GM12878 (cell line): ENCODE measurements at regions of chr1 and their contacts with region 1.

Region 1: DNA sequence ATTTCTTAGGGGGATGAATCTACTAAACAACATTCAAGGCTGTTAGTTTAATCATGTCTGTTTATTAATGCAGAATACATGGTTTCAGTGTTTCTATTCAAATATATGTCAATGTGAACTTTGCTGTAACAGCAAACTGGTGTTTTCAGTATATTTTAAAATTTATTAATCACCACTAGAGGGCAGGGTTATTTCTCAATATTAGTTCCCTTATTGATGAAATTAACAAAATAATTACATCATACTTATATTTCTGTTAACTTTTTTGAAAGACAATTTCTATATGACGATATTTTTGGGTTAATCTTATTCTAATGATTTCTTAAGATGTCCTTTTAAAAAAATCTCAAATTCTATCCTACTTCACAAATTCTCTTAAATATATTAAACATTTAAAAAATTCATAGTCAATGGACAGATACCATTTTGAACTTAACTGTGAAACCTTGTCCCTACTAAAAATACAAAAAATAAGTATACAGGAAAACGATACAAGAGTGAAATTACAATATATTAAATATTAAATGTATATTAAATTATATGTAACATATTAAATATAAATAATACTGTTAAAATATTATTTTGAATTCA is 1034.1 kb upstream of the PRMT6 start:
- DNase-seq: no peak
- ATAC-seq: 0 out of 3 replicates have a peak, but pooled peaks have one; percentile 30
- H3K4me3 ChIP-seq: no peak overlapping the region
- H3K27ac ChIP-seq: no peak overlapping the region
- H3K4me1 ChIP-seq: no peaks in the 10 kb centered on the region
- H3K27me3 ChIP-seq: no peaks in the 10 kb centered on the region
- CTCF ChIP-seq: peak in 1 of 3 experiments; percentile 16; a peak in 2 of 6 replicates
- EP300 ChIP-seq: no peak
- POLR2A ChIP-seq: no peak
- RAD21 ChIP-seq: 0 out of 2 replicates have a peak, but pooled peaks have one; percentile 13

Region 2: GRCh38 chr1:106049595-106049994 is 27.2 kb after region 1 on chr1:
- CTCF ChIA-PET with region 1: no interaction called
- POLR2A ChIA-PET with region 1: no interaction called
- RAD21 ChIA-PET with region 1: no interaction called
- SMC1A ChIA-PET with region 1: no interaction called
- in situ Hi-C with region 1: no loop called
- intact Hi-C with region 1: no loop called
- DNase-seq: no peak
- ATAC-seq: no peak
- H3K4me3 ChIP-seq: no peak overlapping the region
- H3K27ac ChIP-seq: no peak overlapping the region
- H3K4me1 ChIP-seq: no peaks in the 10 kb centered on the region
- H3K27me3 ChIP-seq: no peaks in the 10 kb centered on the region
- CTCF ChIP-seq: no peak
- EP300 ChIP-seq: no peak
- POLR2A ChIP-seq: no peak
- RAD21 ChIP-seq: no peak

Region 3: DNA sequence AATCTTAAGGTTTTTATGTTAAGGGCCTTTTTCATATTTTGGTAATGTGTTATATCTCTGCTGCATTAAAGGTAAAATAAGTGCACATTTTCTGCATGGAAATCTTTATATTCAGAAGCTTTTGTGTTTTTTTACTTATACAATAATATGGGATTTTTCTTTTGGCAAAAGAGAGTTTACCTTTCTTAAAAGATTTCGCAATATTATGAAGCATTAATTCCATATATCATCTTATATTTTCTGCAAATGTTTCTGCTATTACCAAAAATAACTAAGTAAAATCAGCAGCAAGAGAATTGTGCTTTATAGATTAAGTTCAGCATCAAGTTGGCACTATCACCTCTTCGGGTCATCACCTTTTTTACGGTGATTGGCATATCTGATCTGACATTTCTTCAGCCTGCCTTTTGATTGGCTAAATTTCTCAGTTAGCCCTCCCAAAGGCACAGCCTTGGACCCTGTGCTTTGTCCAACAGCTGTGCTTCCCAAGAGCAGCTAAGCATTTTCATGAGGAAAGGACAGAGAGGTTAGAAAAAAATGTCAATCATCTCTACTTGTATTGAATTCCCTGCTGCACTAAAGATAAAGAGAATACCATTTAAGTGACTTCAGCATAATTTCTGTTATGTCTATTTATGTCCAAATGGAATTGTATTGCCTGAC is 267.0 kb after region 1 on chr1:
- CTCF ChIA-PET with region 1: no interaction called
- POLR2A ChIA-PET with region 1: no interaction called
- RAD21 ChIA-PET with region 1: no interaction called
- SMC1A ChIA-PET with region 1: no interaction called
- in situ Hi-C with region 1: no loop called
- intact Hi-C with region 1: no loop called
- DNase-seq: no peak
- ATAC-seq: no peak
- H3K4me3 ChIP-seq: no peak overlapping the region
- H3K27ac ChIP-seq: no peak overlapping the region
- H3K4me1 ChIP-seq: no peaks in the 10 kb centered on the region
- H3K27me3 ChIP-seq: no peaks in the 10 kb centered on the region
- CTCF ChIP-seq: no peak
- EP300 ChIP-seq: no peak
- POLR2A ChIP-seq: no peak
- RAD21 ChIP-seq: no peak

Region 4: GRCh38 chr1:107153014-107153413 is 1130.6 kb after region 1 on chr1:
- CTCF ChIA-PET with region 1: no interaction called
- POLR2A ChIA-PET with region 1: no interaction called
- RAD21 ChIA-PET with region 1: no interaction called
- SMC1A ChIA-PET with region 1: no interaction called
- in situ Hi-C with region 1: no loop called
- intact Hi-C with region 1: loop called (anchors 5 kb)
- DNase-seq: no peak
- ATAC-seq: peak; percentile 38; the same call in 1 of the 3 replicates
- H3K4me3 ChIP-seq: no peak overlapping the region
- H3K27ac ChIP-seq: no peak overlapping the region
- H3K4me1 ChIP-seq: no peaks in the 10 kb centered on the region
- H3K27me3 ChIP-seq: no peaks in the 10 kb centered on the region
- CTCF ChIP-seq: peak; percentile 12 to 30 (median 16); a peak in 2 of 6 replicates
- EP300 ChIP-seq: no peak
- POLR2A ChIP-seq: no peak
- RAD21 ChIP-seq: peak; percentile 54